ENCODE measurements at regions of chr3 and their contacts with region 1.

Region 1: GRCh38 chr3:189512039-189512438 is 119.2 kb upstream of the TP63 start:
- DNase-seq: no peak
- ATAC-seq: peak; percentile 74
- H3K4me3 ChIP-seq: no peak overlapping the region
- H3K27ac ChIP-seq: no peak overlapping the region
- H3K4me1 ChIP-seq: peaks cover 10% of the 10 kb centered on the region; the same call in 1 of the 2 replicates
- H3K27me3 ChIP-seq: no peaks in the 10 kb centered on the region
- CTCF ChIP-seq: peak; percentile 19 to 46 (median 34); a peak in 5 of 6 replicates
- EP300 ChIP-seq: no peak
- POLR2A ChIP-seq: no peak
- RAD21 ChIP-seq: peak; percentile 85

Region 2: GRCh38 chr3:188900421-188900951 is 611.6 kb before region 1 on chr3:
- CTCF ChIA-PET with region 1: no interaction called
- POLR2A ChIA-PET with region 1: no interaction called
- RAD21 ChIA-PET with region 1: no interaction called
- SMC1A ChIA-PET with region 1: no interaction called
- in situ Hi-C with region 1: no loop called
- intact Hi-C with region 1: no loop called
- DNase-seq: no peak
- ATAC-seq: no peak
- H3K4me3 ChIP-seq: no peak overlapping the region
- H3K27ac ChIP-seq: no peak overlapping the region
- H3K4me1 ChIP-seq: no peaks in the 10 kb centered on the region
- H3K27me3 ChIP-seq: no peaks in the 10 kb centered on the region
- CTCF ChIP-seq: no peak
- EP300 ChIP-seq: no peak
- POLR2A ChIP-seq: no peak
- RAD21 ChIP-seq: no peak

Region 3: DNA sequence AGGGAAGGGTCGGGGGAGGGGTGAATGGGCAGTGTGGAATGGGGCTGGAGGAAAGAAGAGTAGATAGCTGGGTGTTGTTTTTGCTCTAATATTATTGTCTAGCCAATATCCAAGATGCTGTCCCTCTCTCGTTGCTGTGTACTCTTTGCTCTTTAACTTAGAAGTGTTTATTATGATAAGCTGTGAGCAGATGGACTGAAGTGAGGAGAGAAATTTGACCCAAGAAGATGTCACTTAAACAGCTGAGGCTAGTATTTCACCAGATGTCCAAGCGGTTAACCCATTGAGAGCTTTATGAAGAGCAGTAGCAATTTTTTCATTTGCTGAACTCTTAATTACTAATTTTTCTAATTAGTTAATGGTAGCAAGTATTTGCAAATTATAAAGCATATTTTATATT is 93.0 kb before region 1 on chr3:
- CTCF ChIA-PET with region 1: no interaction called
- POLR2A ChIA-PET with region 1: no interaction called
- RAD21 ChIA-PET with region 1: no interaction called
- SMC1A ChIA-PET with region 1: no interaction called
- in situ Hi-C with region 1: no loop called
- intact Hi-C with region 1: no loop called
- DNase-seq: no peak
- ATAC-seq: no peak
- H3K4me3 ChIP-seq: no peak overlapping the region
- H3K27ac ChIP-seq: no peak overlapping the region
- H3K4me1 ChIP-seq: no peaks in the 10 kb centered on the region
- H3K27me3 ChIP-seq: no peaks in the 10 kb centered on the region
- CTCF ChIP-seq: no peak
- EP300 ChIP-seq: no peak
- POLR2A ChIP-seq: no peak
- RAD21 ChIP-seq: no peak

Region 4: DNA sequence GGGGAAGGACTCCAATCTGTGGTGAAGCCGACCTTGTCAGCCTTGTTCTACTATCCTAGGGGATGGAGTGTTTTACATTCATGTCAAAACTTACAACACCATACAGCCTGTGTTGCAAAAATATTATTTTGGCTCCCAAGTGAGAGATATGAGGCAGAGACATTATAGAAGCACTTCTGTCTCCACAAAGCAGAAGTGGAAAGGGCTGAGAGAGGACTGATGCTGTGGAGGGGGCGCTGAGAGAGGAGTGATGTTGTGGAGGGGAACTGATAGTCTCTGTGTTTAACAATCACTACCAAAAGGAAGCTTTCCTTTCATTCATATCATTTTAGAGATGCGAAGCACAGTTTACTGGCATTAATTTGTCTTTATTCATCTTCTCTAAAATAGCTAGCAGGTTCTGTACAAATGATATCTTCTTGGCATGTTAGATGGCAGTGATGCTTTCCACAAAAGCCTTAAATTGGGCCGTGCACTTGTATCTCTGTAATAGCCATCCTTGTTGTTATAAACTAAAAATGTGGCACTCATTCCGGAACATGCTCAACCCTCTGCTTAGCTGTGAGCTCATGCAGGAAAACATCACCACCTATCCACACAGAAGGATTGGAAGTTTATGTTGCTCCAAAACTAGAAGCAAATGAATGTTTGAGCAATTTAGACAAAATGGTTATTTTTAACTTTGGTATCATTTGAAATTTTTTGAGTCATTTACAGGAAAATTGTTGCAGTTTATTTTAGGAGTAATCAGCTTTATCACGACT is 15.5 kb before region 1 on chr3:
- CTCF ChIA-PET with region 1: no interaction called
- POLR2A ChIA-PET with region 1: no interaction called
- RAD21 ChIA-PET with region 1: interaction called, 8 read pairs
- SMC1A ChIA-PET with region 1: interaction called, 28 read pairs
- in situ Hi-C with region 1: no loop called
- intact Hi-C with region 1: no loop called
- DNase-seq: no peak
- ATAC-seq: peak; percentile 63
- H3K4me3 ChIP-seq: no peak overlapping the region
- H3K27ac ChIP-seq: no peak overlapping the region
- H3K4me1 ChIP-seq: no peaks in the 10 kb centered on the region
- H3K27me3 ChIP-seq: no peaks in the 10 kb centered on the region
- CTCF ChIP-seq: no peak
- EP300 ChIP-seq: no peak
- POLR2A ChIP-seq: no peak
- RAD21 ChIP-seq: no peak

Region 5: DNA sequence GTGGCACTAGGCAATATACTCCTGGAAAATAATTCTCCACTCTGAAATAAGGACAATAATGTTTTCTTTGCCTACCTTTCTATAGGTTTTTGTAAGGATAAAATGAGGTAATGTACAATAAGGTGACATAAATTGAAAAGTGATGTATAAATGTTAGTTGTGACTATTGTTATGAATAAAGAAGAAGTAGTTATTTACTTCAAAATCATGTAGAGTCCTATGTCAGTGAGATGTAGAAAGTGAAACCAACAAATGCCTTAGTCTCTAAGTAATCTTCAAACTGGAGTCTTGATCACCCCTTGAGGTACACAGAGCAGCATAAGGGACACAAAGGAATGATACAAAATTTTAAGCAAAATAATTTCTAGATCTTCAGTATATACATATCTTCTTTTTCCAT is 58.9 kb after region 1 on chr3:
- CTCF ChIA-PET with region 1: interaction called, 11 read pairs
- POLR2A ChIA-PET with region 1: no interaction called
- RAD21 ChIA-PET with region 1: interaction called, 10 read pairs
- SMC1A ChIA-PET with region 1: interaction called, 13 read pairs
- in situ Hi-C with region 1: no loop called
- intact Hi-C with region 1: no loop called
- DNase-seq: peak; percentile 27
- ATAC-seq: peak; percentile 66
- H3K4me3 ChIP-seq: no peak overlapping the region
- H3K27ac ChIP-seq: peak overlapping the region; percentile 42
- H3K4me1 ChIP-seq: peaks cover 51% of the 10 kb centered on the region
- H3K27me3 ChIP-seq: no peaks in the 10 kb centered on the region
- CTCF ChIP-seq: no peak
- EP300 ChIP-seq: no peak
- POLR2A ChIP-seq: no peak
- RAD21 ChIP-seq: no peak

Region 6: DNA sequence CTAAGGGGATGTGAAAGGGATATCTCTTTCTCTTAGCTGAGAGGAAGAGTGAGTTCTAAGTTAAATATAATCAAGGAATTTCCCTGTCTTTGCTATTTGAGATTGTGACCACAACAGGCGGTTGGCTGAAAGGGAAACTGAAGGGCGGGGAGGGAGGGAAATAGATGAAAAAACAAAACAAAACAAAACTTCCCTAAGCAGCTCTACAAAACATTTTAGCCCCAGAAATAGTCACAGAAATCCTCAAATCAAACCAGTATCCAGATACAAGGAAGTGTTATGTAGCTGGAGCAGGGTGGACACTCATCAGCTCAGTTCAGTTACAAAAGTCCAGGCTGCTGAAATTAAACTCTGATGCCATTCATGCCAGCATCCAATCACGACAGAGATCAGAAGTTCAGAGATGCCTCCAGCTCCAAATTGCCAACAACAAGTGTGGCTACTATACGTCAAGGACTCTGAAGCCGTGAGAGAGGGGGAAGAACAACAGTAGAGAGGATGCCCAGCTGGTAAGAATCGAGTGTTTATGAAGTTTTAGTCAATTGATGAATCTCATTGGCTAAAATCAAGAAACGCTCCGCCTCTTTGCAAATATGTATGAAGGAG is 118.8 kb after region 1 on chr3:
- CTCF ChIA-PET with region 1: interaction called, 5 read pairs
- POLR2A ChIA-PET with region 1: interaction called, 3 read pairs
- RAD21 ChIA-PET with region 1: interaction called, 29 read pairs
- SMC1A ChIA-PET with region 1: interaction called, 27 read pairs
- in situ Hi-C with region 1: no loop called
- intact Hi-C with region 1: loop called (anchors 5 kb)
- DNase-seq: peak; percentile 73
- ATAC-seq: peak; percentile 81
- H3K4me3 ChIP-seq: peak overlapping the region; percentile 65
- H3K27ac ChIP-seq: peak overlapping the region; percentile 86
- H3K4me1 ChIP-seq: peaks cover 13% of the 10 kb centered on the region; the same call in 1 of the 2 replicates
- H3K27me3 ChIP-seq: no peaks in the 10 kb centered on the region
- CTCF ChIP-seq: no peak
- EP300 ChIP-seq: peak in 1 of 2 experiments; percentile 41; a peak in 1 of 4 replicates
- POLR2A ChIP-seq: no peak
- RAD21 ChIP-seq: 0 out of 2 replicates have a peak, but pooled peaks have one; percentile 6

Region 7: DNA sequence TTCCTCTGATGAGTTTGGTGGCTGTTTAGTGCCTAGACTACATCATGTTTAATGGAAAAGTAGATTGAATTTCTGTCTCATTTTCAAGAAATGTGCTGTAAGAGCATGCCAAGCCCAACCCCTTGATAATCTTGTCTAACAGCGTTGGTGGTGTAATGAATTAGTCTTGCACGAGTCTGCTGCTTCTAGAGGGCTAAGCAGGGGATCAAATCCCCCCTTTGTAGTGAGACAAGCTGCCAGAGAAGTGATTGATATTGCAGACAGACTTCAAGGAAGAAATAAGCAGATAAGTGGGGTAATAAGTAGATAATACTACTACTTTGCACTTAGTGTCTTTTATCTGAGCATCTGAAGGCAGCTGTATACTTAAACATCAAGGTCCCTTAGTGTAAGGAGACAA is 260.5 kb after region 1 on chr3:
- CTCF ChIA-PET with region 1: no interaction called
- POLR2A ChIA-PET with region 1: no interaction called
- RAD21 ChIA-PET with region 1: no interaction called
- SMC1A ChIA-PET with region 1: no interaction called
- in situ Hi-C with region 1: no loop called
- intact Hi-C with region 1: no loop called
- DNase-seq: no peak
- ATAC-seq: no peak
- H3K4me3 ChIP-seq: no peak overlapping the region
- H3K27ac ChIP-seq: no peak overlapping the region
- H3K4me1 ChIP-seq: no peaks in the 10 kb centered on the region
- H3K27me3 ChIP-seq: no peaks in the 10 kb centered on the region
- CTCF ChIP-seq: no peak
- EP300 ChIP-seq: no peak
- POLR2A ChIP-seq: no peak
- RAD21 ChIP-seq: no peak

Region 8: GRCh38 chr3:189941679-189942078 is 429.6 kb after region 1 on chr3:
- CTCF ChIA-PET with region 1: interaction called, 90 read pairs
- POLR2A ChIA-PET with region 1: no interaction called
- RAD21 ChIA-PET with region 1: interaction called, 66 read pairs
- SMC1A ChIA-PET with region 1: interaction called, 81 read pairs
- in situ Hi-C with region 1: no loop called
- intact Hi-C with region 1: no loop called
- DNase-seq: no peak
- ATAC-seq: no peak
- H3K4me3 ChIP-seq: no peak overlapping the region
- H3K27ac ChIP-seq: no peak overlapping the region
- H3K4me1 ChIP-seq: no peaks in the 10 kb centered on the region
- H3K27me3 ChIP-seq: no peaks in the 10 kb centered on the region
- CTCF ChIP-seq: no peak
- EP300 ChIP-seq: no peak
- POLR2A ChIP-seq: no peak
- RAD21 ChIP-seq: no peak

Region 9: DNA sequence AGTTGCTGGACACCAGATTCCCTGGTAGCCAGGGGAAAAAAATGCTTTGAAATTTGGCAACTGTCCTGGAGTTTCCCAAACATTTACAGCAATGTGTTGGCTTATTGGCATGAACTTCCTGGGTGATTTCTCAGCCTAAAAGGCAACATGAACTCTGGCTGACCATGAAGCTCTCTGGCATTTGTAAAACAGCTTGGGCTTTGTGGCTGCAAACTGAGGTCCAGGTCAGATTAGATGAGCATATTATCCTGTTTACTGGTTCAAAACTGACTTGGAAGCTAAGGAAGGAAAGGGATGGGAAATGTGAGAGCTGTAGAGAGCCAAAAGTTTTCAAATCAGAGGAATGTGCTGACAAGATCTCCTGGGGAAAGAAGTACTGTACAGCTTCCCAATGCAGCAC is 469.6 kb after region 1 on chr3:
- CTCF ChIA-PET with region 1: no interaction called
- POLR2A ChIA-PET with region 1: no interaction called
- RAD21 ChIA-PET with region 1: no interaction called
- SMC1A ChIA-PET with region 1: no interaction called
- in situ Hi-C with region 1: no loop called
- intact Hi-C with region 1: no loop called
- DNase-seq: no peak
- ATAC-seq: no peak
- H3K4me3 ChIP-seq: no peak overlapping the region
- H3K27ac ChIP-seq: no peak overlapping the region
- H3K4me1 ChIP-seq: no peaks in the 10 kb centered on the region
- H3K27me3 ChIP-seq: no peaks in the 10 kb centered on the region
- CTCF ChIP-seq: no peak
- EP300 ChIP-seq: no peak
- POLR2A ChIP-seq: no peak
- RAD21 ChIP-seq: no peak

Measured in GM12878 (cell line).